ENCODE measurements at regions of chr3 and their contacts with region 1.

Region 1: GRCh38 chr3:16290007-16290826 is 25.2 kb downstream of the OXNAD1 start:
- DNase-seq: no peak
- H3K4me3 ChIP-seq: no peak overlapping the region
- H3K27ac ChIP-seq: peak overlapping the region; percentile 81
- H3K4me1 ChIP-seq: peaks cover 72% of the 10 kb centered on the region
- H3K27me3 ChIP-seq: no peaks in the 10 kb centered on the region
- CTCF ChIP-seq: peak; percentile 88

Region 2: DNA sequence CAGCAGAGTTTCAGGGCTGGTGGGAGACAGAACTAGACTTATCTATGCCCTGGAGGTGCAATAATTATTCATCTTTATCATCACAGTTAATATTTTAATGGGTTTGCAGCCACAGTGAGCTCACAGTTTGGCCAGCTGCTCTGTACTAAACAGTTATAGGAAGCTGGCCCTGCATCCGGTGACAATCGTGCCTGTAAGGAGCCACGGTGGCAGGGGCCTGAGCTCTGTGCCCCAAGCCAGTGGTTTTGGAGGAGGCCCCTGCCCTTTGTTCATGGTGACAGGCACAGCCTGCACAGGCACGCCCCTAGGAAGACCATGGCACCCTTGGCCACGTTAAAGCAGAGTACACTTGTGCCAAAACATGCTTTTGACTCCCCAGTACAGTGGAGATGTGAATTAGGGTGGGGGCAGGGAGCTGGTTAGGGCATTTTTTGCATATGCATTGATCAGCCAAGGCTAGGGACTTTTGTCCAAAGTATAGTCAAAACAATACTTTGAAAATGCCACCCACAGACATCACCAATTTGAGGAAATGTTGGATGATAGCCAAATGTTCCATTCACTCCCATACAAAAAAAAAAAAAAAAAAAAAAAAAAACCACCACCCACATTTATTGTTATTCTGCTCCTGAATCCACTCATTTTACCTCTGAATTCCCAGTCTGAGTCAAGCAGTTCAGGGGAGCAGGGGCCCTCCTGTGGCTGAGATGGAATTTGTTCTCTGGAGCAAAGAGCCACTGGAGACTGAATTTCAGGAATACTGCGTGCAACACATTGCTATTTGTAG is 226.7 kb after region 1 on chr3:
- intact Hi-C with region 1: loop called (anchors 5 kb)
- DNase-seq: peak; percentile 41
- H3K4me3 ChIP-seq: peak overlapping the region; percentile 8
- H3K27ac ChIP-seq: peak overlapping the region; percentile 78
- H3K4me1 ChIP-seq: peaks cover 66% of the 10 kb centered on the region
- H3K27me3 ChIP-seq: no peaks in the 10 kb centered on the region
- CTCF ChIP-seq: peak; percentile 72

Region 3: DNA sequence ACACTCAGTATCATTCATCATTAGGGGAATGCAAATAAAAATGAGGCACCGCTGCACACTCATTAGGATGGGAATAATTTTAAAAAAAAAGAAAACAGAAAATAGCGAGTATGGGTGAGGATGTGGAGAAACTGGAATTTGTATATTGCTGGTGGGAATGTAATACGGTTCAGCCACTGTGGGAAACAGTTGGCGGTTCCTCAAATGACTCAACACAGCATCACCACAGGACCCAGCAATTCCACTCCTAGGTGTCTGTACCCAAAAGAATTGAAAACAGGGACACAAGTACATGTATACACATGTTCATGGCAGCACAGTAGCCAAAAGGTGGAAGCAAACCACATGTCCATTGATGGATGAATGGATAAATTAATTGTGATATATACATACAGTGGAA is 258.5 kb after region 1 on chr3:
- intact Hi-C with region 1: loop called (anchors 2 kb)
- DNase-seq: no peak
- H3K4me3 ChIP-seq: no peak overlapping the region
- H3K27ac ChIP-seq: no peak overlapping the region
- H3K4me1 ChIP-seq: peaks cover 39% of the 10 kb centered on the region
- H3K27me3 ChIP-seq: no peaks in the 10 kb centered on the region
- CTCF ChIP-seq: no peak